ENCODE measurements at regions of chr3 and their contacts with region 1.

Region 1: GRCh38 chr3:101809178-101810021 is 30.4 kb downstream of the NXPE3 start:
- DNase-seq: peak; percentile 71
- ATAC-seq: peak; percentile 64
- H3K4me3 ChIP-seq: no peak overlapping the region
- H3K4me3 Mint-ChIP-seq: no peak overlapping the region
- H3K27ac ChIP-seq: no peak overlapping the region
- H3K27ac Mint-ChIP-seq: no peak overlapping the region
- H3K4me1 ChIP-seq: peaks cover 5 to 13% of the 10 kb centered on the region in 2 donors
- H3K4me1 Mint-ChIP-seq: peaks cover 20% of the 10 kb centered on the region
- H3K27me3 ChIP-seq: no peaks in the 10 kb centered on the region
- H3K27me3 Mint-ChIP-seq: no peaks in the 10 kb centered on the region
- CTCF ChIP-seq: peak; percentile 88

Region 2: GRCh38 chr3:101819758-101820157 is 10.4 kb after region 1 on chr3:
- CTCF ChIA-PET with region 1: interaction called, 87 read pairs
- POLR2A ChIA-PET with region 1: no interaction called
- intact Hi-C with region 1: no loop called
- DNase-seq: peak; percentile 43
- ATAC-seq: no peak
- H3K4me3 ChIP-seq: no peak overlapping the region
- H3K4me3 Mint-ChIP-seq: no peak overlapping the region
- H3K27ac ChIP-seq: no peak overlapping the region
- H3K27ac Mint-ChIP-seq: peak overlapping the region; percentile 20
- H3K4me1 ChIP-seq: peaks cover 33 to 37% of the 10 kb centered on the region in 2 donors
- H3K4me1 Mint-ChIP-seq: peaks cover 42% of the 10 kb centered on the region
- H3K27me3 ChIP-seq: no peaks in the 10 kb centered on the region
- H3K27me3 Mint-ChIP-seq: no peaks in the 10 kb centered on the region
- CTCF ChIP-seq: no peak

Region 3: DNA sequence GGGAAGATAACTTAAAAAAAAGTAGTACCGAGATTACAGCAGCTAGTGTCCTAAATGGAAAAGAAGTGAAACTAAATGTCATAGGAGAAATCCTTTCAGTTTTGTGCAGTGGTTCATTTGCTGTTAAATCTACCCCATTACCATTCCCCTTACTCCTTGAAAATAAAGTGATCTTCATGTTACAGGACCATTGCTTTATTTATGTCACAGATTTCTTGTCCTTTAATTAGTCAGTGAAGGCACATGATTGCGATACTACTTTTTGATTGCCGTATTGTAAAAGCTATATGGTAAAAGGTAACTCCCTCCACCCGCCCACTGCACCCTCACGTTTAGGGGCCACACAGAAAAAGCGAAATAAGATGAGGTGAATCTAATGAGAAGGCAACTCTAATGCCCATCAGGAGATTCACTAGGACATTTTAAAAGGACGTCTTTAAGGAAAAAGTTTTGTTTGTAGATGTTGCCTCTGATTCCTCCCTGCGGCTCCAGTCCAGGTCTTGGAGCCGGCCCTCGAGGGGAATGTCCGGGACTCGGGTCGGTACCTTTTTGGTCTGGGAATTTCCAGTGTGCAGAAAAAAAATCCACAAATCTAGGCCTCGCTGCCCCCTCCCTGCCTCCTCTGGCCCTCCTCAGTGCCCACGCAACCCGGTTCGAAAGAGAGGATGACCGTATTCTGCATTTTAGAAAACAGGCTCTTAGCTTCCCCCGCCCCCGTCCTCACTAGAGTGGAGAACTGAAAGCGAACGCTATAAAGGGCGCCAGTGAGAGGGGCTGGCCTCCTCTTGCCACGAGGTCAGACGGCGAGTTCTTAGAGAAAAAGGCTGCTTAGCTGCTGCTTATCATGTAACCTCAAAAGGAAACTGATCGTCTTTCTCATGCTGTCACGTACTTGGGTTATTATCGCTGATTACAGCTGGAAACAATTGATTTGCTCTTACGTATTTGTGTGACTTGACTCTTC is 18.1 kb after region 1 on chr3:
- CTCF ChIA-PET with region 1: interaction called, 58 read pairs
- POLR2A ChIA-PET with region 1: interaction called, 4 read pairs
- intact Hi-C with region 1: loop called (anchors 2 kb)
- DNase-seq: peak; percentile 93
- ATAC-seq: peak; percentile 90
- H3K4me3 ChIP-seq: peak overlapping the region; percentile 58 to 83 (median 62)
- H3K4me3 Mint-ChIP-seq: peak overlapping the region; percentile 90
- H3K27ac ChIP-seq: peak overlapping the region; percentile 93 to 97
- H3K27ac Mint-ChIP-seq: peak overlapping the region; percentile 96
- H3K4me1 ChIP-seq: peaks cover 44 to 45% of the 10 kb centered on the region in 2 donors
- H3K4me1 Mint-ChIP-seq: peaks cover 58% of the 10 kb centered on the region
- H3K27me3 ChIP-seq: no peaks in the 10 kb centered on the region
- H3K27me3 Mint-ChIP-seq: no peaks in the 10 kb centered on the region
- CTCF ChIP-seq: no peak

Region 4: DNA sequence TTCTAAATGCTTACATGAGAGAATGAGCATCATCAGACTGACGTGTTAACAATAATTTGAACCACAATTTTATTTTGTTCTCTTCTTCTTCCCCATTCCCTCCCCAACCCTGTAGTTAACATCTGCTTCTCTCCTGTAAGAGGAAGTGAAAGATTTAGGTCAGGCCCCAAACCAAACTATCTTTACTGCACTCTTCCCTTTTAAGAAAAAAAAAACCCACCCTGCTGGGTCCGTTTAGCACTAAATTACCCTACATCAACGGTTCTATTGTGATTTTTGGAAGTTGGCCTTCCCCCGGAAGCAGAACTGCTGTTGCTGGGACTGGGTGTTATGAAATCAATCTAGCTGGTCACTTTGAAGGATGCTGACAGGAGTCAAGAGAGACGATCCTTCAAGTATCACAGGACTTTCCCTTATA is 89.4 kb after region 1 on chr3:
- CTCF ChIA-PET with region 1: interaction called, 10 read pairs
- POLR2A ChIA-PET with region 1: no interaction called
- intact Hi-C with region 1: loop called (anchors 1 kb)
- DNase-seq: peak; percentile 86
- ATAC-seq: peak; percentile 94
- H3K4me3 ChIP-seq: peak overlapping the region in 1 of 5 experiments; percentile 1
- H3K4me3 Mint-ChIP-seq: peak overlapping the region; percentile 46
- H3K27ac ChIP-seq: peak overlapping the region; percentile 86 to 90
- H3K27ac Mint-ChIP-seq: peak overlapping the region; percentile 62
- H3K4me1 ChIP-seq: peaks cover 29 to 32% of the 10 kb centered on the region in 2 donors
- H3K4me1 Mint-ChIP-seq: peaks cover 36% of the 10 kb centered on the region
- H3K27me3 ChIP-seq: no peaks in the 10 kb centered on the region
- H3K27me3 Mint-ChIP-seq: no peaks in the 10 kb centered on the region
- CTCF ChIP-seq: no peak

Region 5: GRCh38 chr3:102536456-102536855 is 727.1 kb after region 1 on chr3:
- CTCF ChIA-PET with region 1: interaction called, 16 read pairs
- POLR2A ChIA-PET with region 1: no interaction called
- intact Hi-C with region 1: loop called (anchors 2 kb)
- DNase-seq: peak; percentile 50
- ATAC-seq: no peak
- H3K4me3 ChIP-seq: no peak overlapping the region
- H3K4me3 Mint-ChIP-seq: no peak overlapping the region
- H3K27ac ChIP-seq: no peak overlapping the region
- H3K27ac Mint-ChIP-seq: no peak overlapping the region
- H3K4me1 ChIP-seq: peaks cover 0 to 5% of the 10 kb centered on the region in 2 donors
- H3K4me1 Mint-ChIP-seq: peaks cover 5% of the 10 kb centered on the region
- H3K27me3 ChIP-seq: peaks cover 0 to 10% (median 5%) of the 10 kb centered on the region in 4 experiments
- H3K27me3 Mint-ChIP-seq: peaks cover 28% of the 10 kb centered on the region
- CTCF ChIP-seq: peak; percentile 54

Measured in B cell (primary cell).